Naive thymus-derived CD4-positive, alpha-beta T cell (primary cell): ENCODE measurements at regions of chr1 and their contacts with region 1.

Region 1: DNA sequence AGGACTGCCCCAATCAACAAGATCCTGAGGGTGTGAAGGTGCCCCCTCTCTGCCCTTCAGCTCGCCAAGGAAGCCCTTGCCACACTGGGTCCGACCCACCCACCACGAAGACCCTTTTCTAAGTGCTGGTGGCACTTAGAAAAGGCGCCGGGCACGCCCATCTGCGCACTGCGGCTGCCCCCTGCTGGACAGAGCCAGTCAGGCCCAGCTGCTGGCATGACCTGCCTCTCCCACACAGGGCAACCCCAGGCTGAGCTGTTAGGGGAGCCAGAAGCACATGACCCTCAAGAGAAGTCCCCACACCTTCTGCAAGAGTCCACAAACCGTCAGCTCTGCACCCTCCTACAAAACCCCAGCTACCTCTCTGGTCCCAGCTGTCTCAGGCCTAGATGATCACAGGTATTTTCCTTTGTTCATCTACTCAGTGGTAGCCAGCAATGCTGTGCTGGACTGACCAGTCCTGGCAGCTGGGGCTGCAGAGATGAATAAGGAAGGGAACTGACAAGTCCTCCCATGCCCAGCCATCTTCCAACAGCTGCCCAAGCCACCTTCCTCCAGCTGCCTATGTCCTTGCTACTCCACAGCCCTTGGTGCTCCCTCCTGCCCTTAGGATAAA is 40.0 kb upstream of the ZC3H12A start:
- DNase-seq: peak; percentile 8 to 78 (median 54)
- ATAC-seq: peak; percentile 89
- H3K4me3 ChIP-seq: no peak overlapping the region
- H3K4me3 Mint-ChIP-seq: no peak overlapping the region
- H3K27ac ChIP-seq: no peak overlapping the region
- H3K27ac Mint-ChIP-seq: no peak overlapping the region
- H3K4me1 ChIP-seq: no peaks in the 10 kb centered on the region
- H3K4me1 Mint-ChIP-seq: peaks cover 0 to 7% (median 0%) of the 10 kb centered on the region in 7 donors
- H3K27me3 ChIP-seq: no peaks in the 10 kb centered on the region
- H3K27me3 Mint-ChIP-seq: peaks cover 9 to 24% (median 23%) of the 10 kb centered on the region in 5 donors

Region 2: DNA sequence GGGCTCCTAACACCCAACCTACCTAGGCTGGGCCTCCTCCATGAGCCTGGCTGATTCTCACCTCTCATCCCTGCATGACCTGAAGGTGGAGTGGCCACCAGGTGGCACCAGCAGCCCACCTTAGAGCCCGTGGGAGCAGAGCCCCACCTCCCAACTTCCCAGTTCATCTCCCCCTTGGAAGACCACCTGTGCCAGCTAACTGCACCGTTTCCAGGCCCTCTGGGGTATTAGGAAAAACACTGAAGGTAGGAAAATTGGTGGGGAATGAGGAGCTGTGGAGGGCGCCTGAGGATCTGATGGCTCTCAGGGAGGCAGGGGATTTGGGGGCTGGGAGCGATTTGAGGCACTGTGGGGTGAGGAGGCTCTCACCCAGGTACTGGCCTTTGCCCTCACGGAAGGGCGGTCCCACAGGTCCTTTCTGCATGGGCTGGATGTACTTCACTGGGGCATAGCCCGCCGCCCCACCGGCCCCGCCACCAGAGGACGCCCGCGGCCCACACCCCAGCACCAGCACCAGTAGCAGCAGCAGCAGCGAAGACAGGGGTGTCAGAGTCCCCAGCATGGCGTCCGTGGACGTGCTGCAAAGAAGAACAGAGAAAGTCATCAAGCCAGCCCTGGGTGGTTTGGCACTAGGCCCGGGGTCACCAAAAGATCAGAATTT is 1334.6 kb before region 1 on chr1:
- CTCF ChIA-PET with region 1: no interaction called
- POLR2A ChIA-PET with region 1: no interaction called
- intact Hi-C with region 1: loop called in 1 of 2 experiments (anchors 5 kb)
- DNase-seq: peak; percentile 50 to 79 (median 65)
- ATAC-seq: peak; percentile 92
- H3K4me3 ChIP-seq: no peak overlapping the region
- H3K4me3 Mint-ChIP-seq: peak overlapping the region in 5 of 10 donors; percentile 12 to 50 (median 35)
- H3K27ac ChIP-seq: no peak overlapping the region
- H3K27ac Mint-ChIP-seq: peak overlapping the region in 1 of 9 donors; percentile 14
- H3K4me1 ChIP-seq: no peaks in the 10 kb centered on the region
- H3K4me1 Mint-ChIP-seq: peaks cover 0 to 10% (median 2%) of the 10 kb centered on the region in 7 donors
- H3K27me3 ChIP-seq: no peaks in the 10 kb centered on the region
- H3K27me3 Mint-ChIP-seq: no peaks in the 10 kb centered on the region

Region 3: GRCh38 chr1:36450270-36450918 is 984.0 kb before region 1 on chr1 and contains the start of gene OSCP1:
- CTCF ChIA-PET with region 1: no interaction called
- POLR2A ChIA-PET with region 1: no interaction called
- intact Hi-C with region 1: loop called in 1 of 2 experiments (anchors 5 kb)
- DNase-seq: peak; percentile 73 to 88 (median 83)
- ATAC-seq: peak; percentile 98
- H3K4me3 ChIP-seq: peak within 1 kb of the TSS; percentile 93
- H3K4me3 Mint-ChIP-seq: peak within 1 kb of the TSS; percentile 88 to 98 (median 92)
- H3K27ac ChIP-seq: peak within 1 kb of the TSS; percentile 94
- H3K27ac Mint-ChIP-seq: peak within 1 kb of the TSS; percentile 81 to 99 (median 96)
- H3K4me1 ChIP-seq: peaks cover 0 to 10% of the 10 kb centered on the region in 2 donors
- H3K4me1 Mint-ChIP-seq: peaks cover 7 to 30% (median 23%) of the 10 kb centered on the region in 7 donors
- H3K27me3 ChIP-seq: no peaks in the 10 kb centered on the region
- H3K27me3 Mint-ChIP-seq: no peaks in the 10 kb centered on the region
- total RNA-seq, gene OSCP1: 0.65 to 2.0 (median 0.93) TPM

Region 4: DNA sequence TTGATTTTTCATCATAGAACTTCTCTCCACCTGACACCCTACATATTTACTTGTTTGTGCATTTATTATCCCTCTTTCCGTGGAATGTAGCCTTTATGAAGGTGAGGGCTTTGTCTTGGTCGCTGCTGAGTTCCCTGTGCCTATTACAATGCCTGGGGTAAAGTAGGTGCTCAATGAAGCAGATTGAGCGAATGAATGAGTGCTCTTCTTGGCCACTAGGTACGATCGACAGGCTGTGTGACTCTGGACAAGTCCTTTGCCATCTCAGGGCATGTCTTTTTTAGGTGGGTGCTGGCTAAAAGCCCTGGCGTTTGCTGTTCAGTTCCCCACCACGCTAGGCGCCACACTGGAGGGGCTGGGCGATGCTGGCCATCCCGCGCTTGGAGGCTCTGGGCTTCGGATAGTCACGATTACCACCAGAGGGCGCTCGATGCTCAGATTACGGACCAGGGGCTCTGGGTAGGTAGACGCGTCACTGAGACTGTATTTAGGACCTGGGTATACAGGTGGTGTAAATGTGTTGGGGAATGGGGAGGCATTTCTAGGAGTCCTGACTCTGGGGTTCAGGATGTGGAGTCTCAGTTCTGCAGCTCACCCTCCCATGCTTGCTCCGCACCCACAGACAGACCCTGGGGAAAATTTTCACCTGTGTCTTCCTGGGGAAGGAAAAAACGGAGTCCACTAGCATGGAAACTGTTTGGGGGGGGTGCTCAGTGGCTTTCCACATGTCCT is 880.6 kb before region 1 on chr1:
- CTCF ChIA-PET with region 1: no interaction called
- POLR2A ChIA-PET with region 1: no interaction called
- intact Hi-C with region 1: loop called in 1 of 2 experiments (anchors 10 kb)
- DNase-seq: peak; percentile 12 to 59 (median 41)
- ATAC-seq: peak; percentile 75
- H3K4me3 ChIP-seq: no peak overlapping the region
- H3K4me3 Mint-ChIP-seq: no peak overlapping the region
- H3K27ac ChIP-seq: no peak overlapping the region
- H3K27ac Mint-ChIP-seq: no peak overlapping the region
- H3K4me1 ChIP-seq: no peaks in the 10 kb centered on the region
- H3K4me1 Mint-ChIP-seq: peaks cover 0 to 2% (median 0%) of the 10 kb centered on the region in 7 donors
- H3K27me3 ChIP-seq: peaks cover 0 to 3% of the 10 kb centered on the region in 2 donors
- H3K27me3 Mint-ChIP-seq: peaks cover 41 to 61% (median 43%) of the 10 kb centered on the region in 5 donors